ENCODE measurements at regions of chr12 and their contacts with region 1.

Region 1: DNA sequence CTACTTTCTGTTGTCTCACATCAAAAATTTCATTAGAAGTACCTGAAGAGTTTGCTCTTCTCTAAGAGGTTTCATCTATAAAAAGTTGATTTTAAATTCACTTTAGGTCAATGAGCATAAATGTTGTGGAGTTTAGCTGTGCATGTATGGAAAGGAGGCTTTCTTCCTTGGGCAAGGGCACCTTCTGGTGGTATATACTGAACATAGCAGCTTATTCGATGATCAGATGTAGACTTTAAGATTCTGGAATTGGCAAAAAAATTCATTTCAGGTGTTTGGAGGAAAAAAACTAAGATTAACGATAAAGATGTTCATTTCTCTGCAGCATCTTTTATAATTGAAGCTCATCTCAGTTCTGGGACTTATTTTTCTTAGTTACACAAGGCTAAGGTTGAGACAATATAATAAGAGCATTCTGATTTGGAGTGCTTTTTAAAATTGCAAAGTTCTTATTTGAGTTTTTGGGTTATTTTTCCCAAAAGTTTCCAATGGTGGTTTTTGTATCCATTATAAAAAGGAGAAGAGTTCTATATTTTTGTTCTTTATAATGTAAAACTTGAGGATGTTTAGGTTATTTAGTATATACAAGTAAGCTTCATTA is 46.8 kb downstream of the TMEM117 start:
- DNase-seq: peak; percentile 54
- H3K4me3 ChIP-seq: no peak overlapping the region
- H3K27ac ChIP-seq: no peak overlapping the region
- H3K27me3 ChIP-seq: no peaks in the 10 kb centered on the region
- CTCF ChIP-seq: peak; percentile 97

Region 2: DNA sequence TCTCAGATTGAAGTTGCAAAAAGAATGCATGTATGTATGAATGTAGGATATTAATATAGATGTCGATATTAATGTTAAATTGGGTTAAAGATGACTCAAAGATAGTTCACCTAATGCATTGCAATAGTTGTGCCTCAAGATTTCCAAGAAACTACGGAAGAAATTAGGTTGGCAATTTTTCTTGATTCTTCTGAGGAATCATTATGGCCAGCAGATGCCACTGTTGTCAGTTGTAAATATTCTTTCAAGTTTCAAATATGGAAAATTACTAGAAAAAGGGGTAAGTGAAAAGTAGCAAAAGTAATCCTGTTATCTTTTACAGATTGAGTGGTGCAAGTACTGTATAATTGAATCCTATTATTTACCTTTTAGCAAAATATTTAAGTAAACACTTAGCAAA is 532.8 kb before region 1 on chr12:
- CTCF ChIA-PET with region 1: interaction called, 12 read pairs
- POLR2A ChIA-PET with region 1: no interaction called
- DNase-seq: no peak
- H3K4me3 ChIP-seq: no peak overlapping the region
- H3K27ac ChIP-seq: no peak overlapping the region
- H3K27me3 ChIP-seq: no peaks in the 10 kb centered on the region
- CTCF ChIP-seq: peak; percentile 45

Region 3: DNA sequence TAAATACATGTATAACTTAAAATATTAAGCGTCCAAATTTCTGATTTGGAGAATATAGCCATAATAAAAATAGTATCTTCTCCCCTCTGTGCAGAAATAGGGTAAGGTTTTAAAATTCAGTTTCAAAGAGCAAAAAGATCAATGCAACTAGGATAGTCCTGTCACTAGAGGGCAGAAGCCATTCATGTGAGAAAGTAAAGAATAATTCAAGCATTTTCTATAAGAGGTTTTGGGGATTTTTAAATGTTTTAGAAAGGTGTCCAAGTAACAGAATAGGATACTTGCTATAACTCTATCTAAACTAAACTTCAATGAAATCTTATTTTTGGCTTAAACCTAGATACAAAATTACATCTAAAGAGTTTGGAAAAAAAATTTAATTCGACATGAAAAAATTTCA is 381.0 kb before region 1 on chr12:
- CTCF ChIA-PET with region 1: interaction called, 18 read pairs
- POLR2A ChIA-PET with region 1: no interaction called
- DNase-seq: peak; percentile 1
- H3K4me3 ChIP-seq: no peak overlapping the region
- H3K27ac ChIP-seq: no peak overlapping the region
- H3K27me3 ChIP-seq: no peaks in the 10 kb centered on the region
- CTCF ChIP-seq: peak; percentile 65

Region 4: GRCh38 chr12:43776498-43776897 is 106.2 kb before region 1 on chr12:
- CTCF ChIA-PET with region 1: interaction called, 101 read pairs
- POLR2A ChIA-PET with region 1: interaction called, 5 read pairs
- DNase-seq: no peak
- H3K4me3 ChIP-seq: no peak overlapping the region
- H3K27ac ChIP-seq: no peak overlapping the region
- H3K27me3 ChIP-seq: no peaks in the 10 kb centered on the region
- CTCF ChIP-seq: peak; percentile 48

Region 5: DNA sequence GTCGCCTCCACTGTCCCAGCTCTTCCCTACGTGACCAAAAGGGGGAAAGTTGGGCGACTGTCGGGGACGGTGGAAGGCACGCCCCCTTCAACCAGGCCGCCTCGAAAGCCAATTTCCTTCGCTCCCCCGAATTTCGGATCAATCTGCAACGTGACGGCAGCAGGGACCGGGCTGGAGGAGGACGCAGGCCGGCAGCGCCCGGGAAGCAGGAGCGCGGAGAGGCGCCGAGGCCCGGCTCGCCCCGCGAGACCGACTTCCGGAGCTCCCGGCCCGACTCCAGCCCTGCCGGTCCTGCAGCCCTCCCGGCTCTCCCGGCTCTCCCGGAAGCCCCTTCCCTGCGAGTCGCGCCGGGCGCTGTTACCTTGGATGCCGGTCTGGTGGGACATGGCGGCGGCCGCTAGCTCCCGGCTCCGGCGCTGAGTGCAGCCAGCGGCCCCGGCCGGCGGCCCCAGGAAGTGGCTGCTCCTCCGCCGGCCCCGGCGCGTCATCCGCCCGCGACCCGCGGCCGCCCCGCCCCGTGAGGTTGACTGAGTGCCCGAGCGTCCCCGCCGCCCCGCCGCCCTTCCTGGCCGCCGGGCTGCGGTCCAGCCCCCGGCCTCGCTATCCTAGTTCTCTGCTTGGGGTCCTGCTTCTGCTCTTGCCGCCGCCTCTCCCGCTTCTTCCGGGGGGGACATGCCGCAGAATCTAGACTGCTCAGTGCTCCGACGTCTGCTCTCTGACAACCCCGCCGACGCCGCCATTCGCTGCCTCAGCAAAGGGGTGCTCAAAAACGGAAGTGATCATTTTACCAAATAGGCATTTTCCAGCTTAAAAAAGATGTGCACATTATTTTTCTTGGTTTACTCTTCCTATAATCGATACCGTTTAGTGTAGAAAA is 76.6 kb before region 1 on chr12 and contains the start of gene TWF1:
- CTCF ChIA-PET with region 1: interaction called, 25 read pairs
- POLR2A ChIA-PET with region 1: interaction called, 5 read pairs
- DNase-seq: no peak
- H3K4me3 ChIP-seq: peak within 1 kb of the TSS; percentile 87
- H3K27ac ChIP-seq: peak within 1 kb of the TSS; percentile 94
- H3K27me3 ChIP-seq: no peaks in the 10 kb centered on the region
- CTCF ChIP-seq: peak; percentile 27; the same call in 1 of the 2 replicates
- polyA plus RNA-seq, gene TWF1: 101 and 147 TPM in 2 replicates

Region 6: GRCh38 chr12:43872396-43872795 is 10.3 kb before region 1 on chr12:
- CTCF ChIA-PET with region 1: interaction called, 15 read pairs
- POLR2A ChIA-PET with region 1: no interaction called
- DNase-seq: no peak
- H3K4me3 ChIP-seq: no peak overlapping the region
- H3K27ac ChIP-seq: no peak overlapping the region
- H3K27me3 ChIP-seq: no peaks in the 10 kb centered on the region
- CTCF ChIP-seq: no peak